ENCODE measurements at regions of chr11 and their contacts with region 1.

Region 1: GRCh38 chr11:2305140-2305840 is 3.5 kb downstream of the TSPAN32 start:
- DNase-seq: peak; percentile 89
- ATAC-seq: peak; percentile 62
- H3K4me3 Mint-ChIP-seq: peak overlapping the region; percentile 94
- H3K27ac Mint-ChIP-seq: peak overlapping the region; percentile 89
- H3K4me1 Mint-ChIP-seq: peaks cover 55% of the 10 kb centered on the region
- H3K27me3 Mint-ChIP-seq: no peaks in the 10 kb centered on the region

Region 2: GRCh38 chr11:2166091-2166851 is 139.0 kb before region 1 on chr11:
- CTCF ChIA-PET with region 1: interaction called, 11 read pairs
- POLR2A ChIA-PET with region 1: no interaction called
- DNase-seq: peak; percentile 50
- ATAC-seq: peak; percentile 71
- H3K4me3 Mint-ChIP-seq: no peak overlapping the region
- H3K27ac Mint-ChIP-seq: no peak overlapping the region
- H3K4me1 Mint-ChIP-seq: no peaks in the 10 kb centered on the region
- H3K27me3 Mint-ChIP-seq: no peaks in the 10 kb centered on the region

Region 3: GRCh38 chr11:2316169-2316972 is 11.1 kb after region 1 on chr11:
- CTCF ChIA-PET with region 1: interaction called, 14 read pairs
- POLR2A ChIA-PET with region 1: interaction called, 6 read pairs
- DNase-seq: no peak
- ATAC-seq: no peak
- H3K4me3 Mint-ChIP-seq: no peak overlapping the region
- H3K27ac Mint-ChIP-seq: no peak overlapping the region
- H3K4me1 Mint-ChIP-seq: no peaks in the 10 kb centered on the region
- H3K27me3 Mint-ChIP-seq: peaks cover 4% of the 10 kb centered on the region

Region 4: DNA sequence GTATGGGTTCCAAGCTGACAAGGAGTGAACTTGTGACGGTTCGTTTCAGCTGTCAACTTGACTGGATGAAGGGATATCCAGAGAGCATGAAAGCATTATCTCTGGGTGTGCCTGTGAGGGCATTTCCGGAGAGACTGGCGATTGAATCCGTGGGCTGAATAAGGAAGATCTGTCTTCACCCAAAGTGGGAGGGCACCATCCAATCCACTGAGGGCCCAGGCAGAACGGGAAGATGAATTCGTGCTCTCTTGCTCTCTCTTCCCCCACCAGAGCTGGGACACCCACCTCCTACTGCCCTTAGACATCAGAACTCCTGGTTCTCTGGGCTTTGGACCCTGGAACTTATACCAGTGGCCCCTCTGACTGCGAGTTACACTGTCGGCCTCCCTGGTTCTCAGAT is 56.3 kb after region 1 on chr11:
- CTCF ChIA-PET with region 1: no interaction called
- POLR2A ChIA-PET with region 1: no interaction called
- DNase-seq: no peak
- ATAC-seq: no peak
- H3K4me3 Mint-ChIP-seq: no peak overlapping the region
- H3K27ac Mint-ChIP-seq: no peak overlapping the region
- H3K4me1 Mint-ChIP-seq: no peaks in the 10 kb centered on the region
- H3K27me3 Mint-ChIP-seq: no peaks in the 10 kb centered on the region

Region 5: DNA sequence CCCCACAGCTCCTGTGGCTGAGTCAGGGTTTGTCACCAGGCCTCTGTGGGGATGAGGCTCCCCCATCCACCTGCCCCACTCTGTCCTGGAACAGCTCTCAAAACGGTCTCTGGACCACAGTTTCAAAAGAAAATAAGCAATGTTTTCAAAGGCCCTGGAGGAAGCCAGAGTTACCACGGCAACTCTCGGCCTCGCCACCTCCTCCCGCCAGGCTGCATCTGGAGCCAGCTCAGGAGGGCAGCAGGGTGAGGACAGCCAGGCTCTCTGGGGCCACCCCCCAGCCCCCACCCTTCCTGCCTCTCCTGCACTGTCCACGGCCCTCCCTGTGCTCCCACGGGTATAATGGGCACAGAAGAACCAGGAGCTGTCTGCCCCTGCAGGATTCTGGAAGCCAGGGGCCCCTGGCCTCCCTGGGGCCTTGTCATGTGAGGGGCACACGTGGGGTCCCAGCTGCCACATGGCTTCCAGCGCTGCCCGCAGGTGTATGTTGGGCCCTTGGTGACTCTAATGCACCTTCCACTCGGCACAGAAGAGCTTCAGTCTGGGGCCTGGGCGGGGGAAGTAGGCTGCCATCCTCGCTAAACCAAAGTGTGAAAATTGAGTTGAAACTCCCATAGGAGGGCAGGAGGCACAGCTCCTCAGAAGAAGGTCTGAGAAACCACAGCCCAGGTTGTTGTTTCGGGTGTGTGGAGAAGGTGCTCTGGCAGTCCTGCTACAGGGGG is 82.1 kb after region 1 on chr11:
- CTCF ChIA-PET with region 1: interaction called, 27 read pairs
- POLR2A ChIA-PET with region 1: interaction called, 4 read pairs
- DNase-seq: peak; percentile 50
- ATAC-seq: peak; percentile 40
- H3K4me3 Mint-ChIP-seq: peak overlapping the region; percentile 28
- H3K27ac Mint-ChIP-seq: peak overlapping the region; percentile 77
- H3K4me1 Mint-ChIP-seq: peaks cover 61% of the 10 kb centered on the region
- H3K27me3 Mint-ChIP-seq: no peaks in the 10 kb centered on the region

Region 6: DNA sequence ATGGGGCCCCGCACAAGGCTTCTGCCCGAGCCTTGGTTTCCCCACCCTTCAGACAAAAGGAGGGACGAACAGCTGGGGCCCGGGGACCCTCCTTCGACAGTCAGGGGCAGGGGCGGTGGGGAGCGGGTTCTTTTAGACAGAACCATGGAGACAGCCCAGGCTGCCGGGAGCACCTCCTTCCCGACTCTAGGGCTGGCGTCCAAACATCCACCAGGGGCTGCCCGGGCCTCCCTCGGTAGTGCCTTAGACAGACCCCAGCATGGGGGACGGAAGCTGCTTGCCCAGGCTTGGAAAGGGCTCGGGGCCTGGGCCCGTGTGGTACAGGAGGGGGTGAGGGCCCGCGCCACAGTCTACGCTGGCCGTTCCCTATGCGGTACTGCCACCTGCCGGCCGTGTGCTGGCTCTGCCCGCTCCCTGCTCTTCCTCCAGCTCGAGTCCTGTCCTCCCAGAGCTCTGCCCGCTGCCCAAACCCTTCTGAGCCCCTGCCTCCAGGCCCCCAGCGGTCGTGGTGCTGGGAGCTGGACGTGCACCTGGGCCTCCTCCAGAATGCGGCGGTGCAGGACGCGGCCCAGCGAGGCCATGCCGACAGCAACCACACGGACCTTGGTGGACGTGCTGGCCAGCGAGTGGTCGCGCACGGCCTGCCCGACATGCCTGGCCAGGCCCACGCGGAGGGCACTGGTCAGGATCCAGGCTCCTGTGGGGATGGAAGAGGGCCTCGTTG is 115.4 kb after region 1 on chr11:
- CTCF ChIA-PET with region 1: interaction called, 351 read pairs
- POLR2A ChIA-PET with region 1: interaction called, 3 read pairs
- DNase-seq: peak; percentile 78
- ATAC-seq: peak; percentile 93
- H3K4me3 Mint-ChIP-seq: no peak overlapping the region
- H3K27ac Mint-ChIP-seq: no peak overlapping the region
- H3K4me1 Mint-ChIP-seq: no peaks in the 10 kb centered on the region
- H3K27me3 Mint-ChIP-seq: no peaks in the 10 kb centered on the region